HepG2 (cell line): ENCODE measurements at regions of chr13 and their contacts with region 1.

Region 1: GRCh38 chr13:61685682-61686012 is 270.0 kb upstream of the PCDH20 start:
- DNase-seq: peak; percentile 34
- ATAC-seq: peak; percentile 100
- H3K4me3 ChIP-seq: no peak overlapping the region
- H3K27ac ChIP-seq: no peak overlapping the region
- H3K4me1 ChIP-seq: no peaks in the 10 kb centered on the region
- H3K27me3 ChIP-seq: no peaks in the 10 kb centered on the region
- CTCF ChIP-seq: peak; percentile 88
- EP300 ChIP-seq: no peak
- POLR2A ChIP-seq: no peak
- RAD21 ChIP-seq: peak; percentile 70

Region 2: GRCh38 chr13:60627071-60627686 is 1058.5 kb before region 1 on chr13:
- CTCF ChIA-PET with region 1: no interaction called
- POLR2A ChIA-PET with region 1: no interaction called
- in situ Hi-C with region 1: loop called (anchors 25 kb)
- intact Hi-C with region 1: no loop called
- DNase-seq: peak; percentile 29
- ATAC-seq: peak; percentile 98
- H3K4me3 ChIP-seq: no peak overlapping the region
- H3K27ac ChIP-seq: no peak overlapping the region
- H3K4me1 ChIP-seq: no peaks in the 10 kb centered on the region
- H3K27me3 ChIP-seq: no peaks in the 10 kb centered on the region; a peak in 1 of 5 replicates
- CTCF ChIP-seq: peak; percentile 76
- EP300 ChIP-seq: no peak
- POLR2A ChIP-seq: no peak
- RAD21 ChIP-seq: peak; percentile 58

Region 3: GRCh38 chr13:60654415-60654814 is 1031.2 kb before region 1 on chr13:
- CTCF ChIA-PET with region 1: no interaction called
- POLR2A ChIA-PET with region 1: no interaction called
- in situ Hi-C with region 1: loop called (anchors 25 kb)
- intact Hi-C with region 1: loop called (anchors 5 kb)
- DNase-seq: peak; percentile 16
- ATAC-seq: peak; percentile 93
- H3K4me3 ChIP-seq: no peak overlapping the region
- H3K27ac ChIP-seq: no peak overlapping the region
- H3K4me1 ChIP-seq: no peaks in the 10 kb centered on the region
- H3K27me3 ChIP-seq: no peaks in the 10 kb centered on the region
- CTCF ChIP-seq: peak; percentile 69
- EP300 ChIP-seq: no peak
- POLR2A ChIP-seq: no peak
- RAD21 ChIP-seq: no peak

Region 4: DNA sequence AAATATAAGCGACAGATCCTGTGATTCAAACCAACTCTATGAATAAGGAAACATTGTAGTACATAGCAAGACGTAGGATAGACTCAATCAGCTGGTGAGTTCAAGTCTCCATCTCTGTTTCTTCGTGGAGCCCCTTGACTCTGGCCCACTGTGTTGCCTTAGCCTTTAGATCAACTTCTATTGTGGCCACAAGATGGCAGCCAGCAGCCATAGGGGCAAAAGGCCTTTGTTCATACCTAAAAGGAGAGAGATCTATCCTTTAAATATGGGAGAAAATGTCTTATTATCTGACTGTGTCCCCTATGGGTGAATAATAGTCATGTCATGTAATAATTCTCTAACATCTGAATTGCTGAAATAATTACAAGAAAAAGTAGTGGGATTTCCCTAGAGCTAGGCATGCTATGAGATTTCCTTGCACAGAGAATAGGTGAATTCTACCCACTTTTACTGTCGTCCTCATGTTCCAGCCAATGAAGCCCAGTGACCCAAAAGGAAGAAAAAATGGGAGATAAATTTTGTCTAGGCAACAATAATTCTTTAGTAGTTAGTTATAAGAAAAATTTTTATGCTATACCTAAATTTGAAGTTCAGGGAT is 399.4 kb before region 1 on chr13:
- CTCF ChIA-PET with region 1: interaction called, 3 read pairs
- POLR2A ChIA-PET with region 1: no interaction called
- in situ Hi-C with region 1: no loop called
- intact Hi-C with region 1: loop called (anchors 1 kb)
- DNase-seq: peak; percentile 2
- ATAC-seq: peak; percentile 84
- H3K4me3 ChIP-seq: no peak overlapping the region
- H3K27ac ChIP-seq: no peak overlapping the region
- H3K4me1 ChIP-seq: no peaks in the 10 kb centered on the region
- H3K27me3 ChIP-seq: no peaks in the 10 kb centered on the region
- CTCF ChIP-seq: peak; percentile 51
- EP300 ChIP-seq: no peak
- POLR2A ChIP-seq: no peak
- RAD21 ChIP-seq: no peak

Region 5: GRCh38 chr13:61410669-61411297 is 274.9 kb before region 1 on chr13:
- CTCF ChIA-PET with region 1: interaction called, 5 read pairs
- POLR2A ChIA-PET with region 1: no interaction called
- in situ Hi-C with region 1: loop called (anchors 10 kb)
- intact Hi-C with region 1: loop called (anchors 5 kb)
- DNase-seq: peak; percentile 5
- ATAC-seq: no peak
- H3K4me3 ChIP-seq: no peak overlapping the region
- H3K27ac ChIP-seq: no peak overlapping the region
- H3K4me1 ChIP-seq: no peaks in the 10 kb centered on the region
- H3K27me3 ChIP-seq: peaks cover 5 to 28% of the 10 kb centered on the region in 2 experiments
- CTCF ChIP-seq: peak; percentile 21; the same call in 1 of the 2 replicates
- EP300 ChIP-seq: no peak
- POLR2A ChIP-seq: no peak
- RAD21 ChIP-seq: no peak